ENCODE measurements at regions of chr17 and their contacts with region 1.

Region 1: DNA sequence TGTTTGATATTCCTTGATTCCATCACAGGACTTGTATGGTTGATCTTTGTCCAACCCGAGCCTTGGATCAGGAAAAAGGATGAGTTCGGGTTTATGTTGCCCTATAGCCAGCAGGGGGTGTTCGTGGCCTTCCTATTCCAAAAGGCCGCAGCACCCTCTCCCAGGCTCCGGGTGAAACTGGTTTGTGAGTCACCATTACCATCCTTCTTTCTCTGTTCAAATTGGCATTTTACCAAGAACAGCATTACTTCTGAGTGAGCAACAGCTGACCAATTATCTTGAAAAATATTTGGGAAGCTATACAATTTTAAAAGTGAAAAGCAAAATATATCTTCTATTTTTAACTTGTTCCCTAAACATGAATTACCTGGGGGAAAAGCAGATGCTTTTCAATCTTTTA is 24.3 kb upstream of the KRT20 start:
- DNase-seq: peak; percentile 83
- H3K4me3 ChIP-seq: no peak overlapping the region
- H3K27ac ChIP-seq: no peak overlapping the region
- H3K4me1 ChIP-seq: no peaks in the 10 kb centered on the region
- H3K27me3 ChIP-seq: no peaks in the 10 kb centered on the region
- CTCF ChIP-seq: peak; percentile 56

Region 2: DNA sequence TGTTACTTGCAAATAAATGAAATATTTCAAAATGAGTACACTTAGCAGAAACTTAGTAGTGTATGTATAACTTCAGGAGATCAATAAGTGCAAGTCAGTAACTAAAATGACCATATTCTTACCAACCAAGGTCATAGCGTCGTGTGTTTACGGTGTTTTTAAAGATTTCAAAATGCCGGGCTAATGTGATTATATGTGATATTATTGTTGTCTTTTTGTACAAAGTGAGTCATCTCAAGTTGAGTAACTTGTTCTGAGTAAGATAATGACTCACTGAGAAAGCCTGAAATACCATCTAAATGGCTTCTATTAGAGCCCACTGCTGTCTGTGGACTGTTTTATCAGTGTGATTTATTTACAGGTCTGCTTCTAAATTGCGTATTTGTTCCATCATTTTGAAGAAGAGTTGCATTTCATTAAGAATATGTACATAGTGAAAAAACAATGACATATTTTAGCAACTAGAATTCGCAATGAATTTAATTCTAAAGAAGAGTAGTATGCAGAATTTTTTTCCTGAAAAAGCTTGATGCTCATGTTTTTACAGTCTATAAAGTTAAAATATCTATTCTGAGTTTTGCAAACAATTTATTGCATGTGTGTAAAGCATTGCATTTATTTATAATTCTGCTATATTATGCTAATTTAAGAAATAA is 55.1 kb before region 1 on chr17:
- intact Hi-C with region 1: loop called (anchors 5 kb)
- DNase-seq: no peak
- H3K4me3 ChIP-seq: no peak overlapping the region
- H3K27ac ChIP-seq: no peak overlapping the region
- H3K4me1 ChIP-seq: no peaks in the 10 kb centered on the region
- H3K27me3 ChIP-seq: no peaks in the 10 kb centered on the region
- CTCF ChIP-seq: no peak

Region 3: DNA sequence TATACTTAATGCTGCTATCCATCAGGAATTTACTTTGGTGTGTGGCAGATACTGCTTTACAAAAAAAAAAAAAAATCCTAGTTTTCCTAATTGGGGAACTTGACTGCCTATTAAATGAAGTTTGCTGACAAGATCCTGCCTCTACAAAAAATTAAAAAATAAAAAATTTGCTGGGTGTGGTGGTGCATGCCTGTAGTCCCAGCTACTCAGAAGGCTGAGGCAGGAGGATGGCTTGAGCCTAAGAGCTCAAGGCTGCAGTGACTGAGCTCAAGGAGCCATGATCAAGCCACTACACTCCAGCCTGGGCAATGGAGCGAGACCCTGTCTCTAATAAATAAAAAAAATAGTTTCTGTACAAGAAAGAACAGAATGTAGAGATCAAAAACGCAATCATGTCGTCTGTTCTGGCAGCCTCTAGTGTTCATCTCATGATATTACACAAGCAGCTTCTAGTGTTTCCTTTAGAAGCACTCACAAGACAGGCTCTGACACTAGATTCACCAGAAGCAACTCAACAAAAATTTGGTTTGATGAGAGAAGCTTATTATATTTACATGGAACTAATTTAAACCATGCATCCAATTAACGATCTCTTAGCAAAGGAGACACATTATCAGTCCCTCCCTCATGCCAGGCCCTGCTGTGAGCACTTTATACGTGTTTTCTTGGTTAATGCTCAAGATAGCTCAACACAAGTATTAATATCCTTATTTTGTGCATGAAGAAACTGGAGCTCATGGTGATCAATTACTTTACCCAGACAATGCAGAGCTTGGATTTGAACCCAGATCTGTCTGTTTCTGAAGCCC is 412.9 kb after region 1 on chr17:
- intact Hi-C with region 1: loop called (anchors 5 kb)
- DNase-seq: no peak
- H3K4me3 ChIP-seq: no peak overlapping the region
- H3K27ac ChIP-seq: no peak overlapping the region
- H3K4me1 ChIP-seq: no peaks in the 10 kb centered on the region
- H3K27me3 ChIP-seq: no peaks in the 10 kb centered on the region
- CTCF ChIP-seq: peak; percentile 79

Region 4: DNA sequence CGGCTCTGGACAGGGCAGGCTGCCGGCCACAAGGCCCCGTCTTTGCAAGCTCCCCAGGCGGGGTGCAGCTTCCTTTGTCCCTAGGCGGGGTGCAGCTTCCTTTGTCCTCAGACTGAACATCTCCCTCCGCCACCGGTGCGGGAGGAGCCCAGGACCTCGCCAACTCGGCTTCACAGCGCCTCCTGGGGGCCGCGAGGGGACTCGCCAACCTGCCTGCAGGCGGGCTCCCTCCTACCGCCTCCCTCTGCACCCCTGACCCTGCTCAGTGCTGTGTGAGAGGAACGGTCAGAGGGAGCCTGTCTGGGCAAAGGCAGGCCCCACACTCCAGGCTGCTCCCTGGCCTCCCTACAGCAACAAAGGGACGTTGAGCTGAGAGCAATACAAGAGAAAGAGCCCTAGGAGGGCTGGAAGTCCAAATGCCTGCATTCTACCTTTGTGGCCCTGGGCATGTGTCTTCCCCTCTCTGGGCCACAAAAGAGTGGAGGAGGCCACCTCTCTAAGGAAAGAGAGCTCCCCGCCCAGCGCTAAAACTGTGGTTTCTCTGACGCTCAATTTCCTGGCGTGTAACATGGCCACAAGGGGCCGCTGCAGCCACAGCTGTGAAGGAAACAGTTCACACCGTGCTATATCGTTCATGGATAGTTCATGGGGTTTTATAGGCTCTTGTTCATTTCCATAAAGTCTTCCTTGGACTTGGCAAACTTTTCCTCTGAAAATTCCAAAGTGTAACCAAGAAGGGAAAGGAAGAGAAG is 639.7 kb after region 1 on chr17:
- intact Hi-C with region 1: loop called (anchors 2 kb)
- DNase-seq: peak; percentile 93
- H3K4me3 ChIP-seq: no peak overlapping the region
- H3K27ac ChIP-seq: peak overlapping the region; percentile 87
- H3K4me1 ChIP-seq: peaks cover 23% of the 10 kb centered on the region
- H3K27me3 ChIP-seq: no peaks in the 10 kb centered on the region
- CTCF ChIP-seq: peak; percentile 93

Measured in colonic mucosa (tissue), 4 donors.